Right ventricle myocardium superior (tissue), 1 donor: ENCODE measurements at regions of chr9 and their contacts with region 1.

Region 1: GRCh38 chr9:134101623-134102149 is 33.9 kb upstream of the BRD3 start:
- DNase-seq: no peak
- ATAC-seq: no peak

Region 2: DNA sequence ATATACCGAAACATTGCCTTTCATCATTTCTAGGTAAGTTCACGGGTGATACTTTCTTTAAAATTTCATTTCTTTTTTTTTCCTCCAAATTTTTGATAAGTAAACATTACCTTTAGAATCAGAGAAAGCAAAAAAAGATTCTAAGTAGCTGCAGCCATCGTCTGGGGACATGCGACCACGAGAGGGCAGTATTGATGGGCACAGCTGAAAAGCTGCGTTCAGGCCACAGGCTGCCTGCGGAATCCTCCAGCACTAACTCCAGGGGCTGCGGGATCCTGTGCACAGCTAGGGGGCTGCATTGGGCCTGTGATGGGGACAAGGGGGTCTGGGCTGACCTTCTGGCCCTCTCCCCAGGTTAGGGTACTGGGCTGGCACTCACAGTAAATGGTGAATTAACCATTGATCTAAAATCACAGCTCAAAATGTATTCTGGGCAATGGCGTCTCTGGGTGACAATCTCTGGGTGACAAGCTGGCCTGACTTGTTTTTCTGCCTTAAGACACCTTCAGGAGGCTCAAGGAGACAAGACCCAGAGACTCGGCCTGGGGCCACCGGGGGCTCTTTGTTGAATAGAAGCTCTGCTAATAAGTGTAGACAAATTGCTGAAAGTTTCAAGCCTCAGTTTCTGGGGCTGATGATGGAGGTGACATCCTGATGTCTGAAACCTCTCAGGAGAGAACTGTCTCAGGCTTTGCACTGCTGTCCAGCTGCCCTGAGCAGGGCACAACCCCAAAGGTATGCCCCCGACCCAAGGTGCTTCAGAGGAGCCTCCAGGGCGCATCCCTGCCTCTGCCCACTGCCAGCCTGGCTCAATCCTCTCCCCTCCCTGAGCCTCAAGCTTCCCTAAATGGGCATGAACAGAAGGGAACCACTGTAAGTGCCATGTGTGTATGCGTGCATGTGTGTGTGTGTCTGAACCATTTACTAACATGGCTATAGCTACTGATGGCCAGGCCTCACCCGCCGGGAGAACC is 319.2 kb before region 1 on chr9:
- intact Hi-C with region 1: loop called (anchors 5 kb)
- DNase-seq: peak; percentile 81
- ATAC-seq: peak; percentile 78